HepG2 (cell line): ENCODE measurements at regions of chr13 and their contacts with region 1.

Region 1: GRCh38 chr13:87208636-87209035 is 462.5 kb upstream of the SLITRK5 start:
- DNase-seq: no peak
- ATAC-seq: no peak
- H3K4me3 ChIP-seq: no peak overlapping the region
- H3K27ac ChIP-seq: no peak overlapping the region
- H3K4me1 ChIP-seq: no peaks in the 10 kb centered on the region
- H3K27me3 ChIP-seq: no peaks in the 10 kb centered on the region
- CTCF ChIP-seq: no peak
- EP300 ChIP-seq: no peak
- POLR2A ChIP-seq: no peak
- RAD21 ChIP-seq: no peak

Region 2: DNA sequence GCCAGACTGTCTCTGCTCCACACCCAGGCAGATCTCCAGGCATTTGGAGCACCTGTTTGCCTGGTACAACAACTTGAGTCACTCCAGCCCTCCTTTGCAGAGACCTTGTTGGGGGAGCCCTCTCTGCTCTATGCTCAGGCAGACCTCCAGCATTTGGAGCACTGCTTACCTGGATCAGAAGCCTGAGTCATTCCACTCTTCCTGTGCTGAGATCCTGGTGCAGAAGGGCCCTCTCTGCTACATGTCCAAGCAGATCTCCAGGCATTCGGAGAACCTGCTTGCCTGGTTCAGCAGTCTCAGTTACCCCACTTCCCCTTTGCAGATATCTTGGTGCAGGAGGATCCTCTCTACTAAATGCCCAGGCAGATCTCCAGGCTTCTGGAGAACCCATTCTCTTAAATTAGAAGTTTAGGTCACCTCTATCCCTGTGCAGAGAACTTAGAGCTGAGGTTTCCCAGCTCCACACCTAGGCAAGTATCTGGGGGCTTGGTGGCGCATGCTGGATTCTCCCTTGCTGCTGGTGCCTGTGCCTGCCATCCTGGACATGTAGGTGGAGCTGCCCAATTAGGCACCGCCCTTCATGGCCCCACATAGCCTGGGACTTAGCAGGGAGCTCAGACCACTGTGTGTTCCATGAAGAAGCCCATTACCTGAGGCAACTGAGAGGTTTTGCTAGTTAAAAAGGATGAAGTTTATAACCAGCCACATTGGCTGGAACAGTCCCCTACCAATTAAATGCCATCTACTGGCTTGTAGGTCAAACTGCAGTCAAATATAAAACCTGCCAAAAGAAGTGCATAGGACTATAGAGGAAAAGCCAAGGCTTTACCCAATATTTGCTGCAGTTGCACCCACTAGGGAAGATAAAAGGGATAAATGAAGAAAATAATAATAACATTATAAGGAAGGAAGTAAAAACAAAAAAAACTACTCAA is 1311.9 kb before region 1 on chr13:
- CTCF ChIA-PET with region 1: no interaction called
- POLR2A ChIA-PET with region 1: no interaction called
- in situ Hi-C with region 1: no loop called
- intact Hi-C with region 1: loop called (anchors 10 kb)
- DNase-seq: no peak
- ATAC-seq: peak; percentile 76
- H3K4me3 ChIP-seq: no peak overlapping the region
- H3K27ac ChIP-seq: no peak overlapping the region
- H3K4me1 ChIP-seq: no peaks in the 10 kb centered on the region
- H3K27me3 ChIP-seq: no peaks in the 10 kb centered on the region
- CTCF ChIP-seq: 0 out of 2 replicates have a peak, but pooled peaks have one; percentile 8
- EP300 ChIP-seq: no peak
- POLR2A ChIP-seq: no peak
- RAD21 ChIP-seq: no peak

Region 3: GRCh38 chr13:87003265-87003664 is 205.4 kb before region 1 on chr13:
- CTCF ChIA-PET with region 1: no interaction called
- POLR2A ChIA-PET with region 1: no interaction called
- in situ Hi-C with region 1: no loop called
- intact Hi-C with region 1: no loop called
- DNase-seq: no peak
- ATAC-seq: no peak
- H3K4me3 ChIP-seq: no peak overlapping the region
- H3K27ac ChIP-seq: no peak overlapping the region
- H3K4me1 ChIP-seq: no peaks in the 10 kb centered on the region
- H3K27me3 ChIP-seq: no peaks in the 10 kb centered on the region
- CTCF ChIP-seq: no peak
- EP300 ChIP-seq: no peak
- POLR2A ChIP-seq: no peak
- RAD21 ChIP-seq: no peak

Region 4: GRCh38 chr13:87280139-87280538 is 71.5 kb after region 1 on chr13:
- CTCF ChIA-PET with region 1: no interaction called
- POLR2A ChIA-PET with region 1: no interaction called
- in situ Hi-C with region 1: no loop called
- intact Hi-C with region 1: no loop called
- DNase-seq: no peak
- ATAC-seq: no peak
- H3K4me3 ChIP-seq: no peak overlapping the region
- H3K27ac ChIP-seq: no peak overlapping the region
- H3K4me1 ChIP-seq: no peaks in the 10 kb centered on the region
- H3K27me3 ChIP-seq: no peaks in the 10 kb centered on the region
- CTCF ChIP-seq: no peak
- EP300 ChIP-seq: no peak
- POLR2A ChIP-seq: no peak
- RAD21 ChIP-seq: no peak

Region 5: GRCh38 chr13:87975035-87975434 is 766.4 kb after region 1 on chr13:
- CTCF ChIA-PET with region 1: no interaction called
- POLR2A ChIA-PET with region 1: no interaction called
- in situ Hi-C with region 1: no loop called
- intact Hi-C with region 1: no loop called
- DNase-seq: no peak
- ATAC-seq: no peak
- H3K4me3 ChIP-seq: no peak overlapping the region
- H3K27ac ChIP-seq: no peak overlapping the region
- H3K4me1 ChIP-seq: no peaks in the 10 kb centered on the region
- H3K27me3 ChIP-seq: no peaks in the 10 kb centered on the region
- CTCF ChIP-seq: no peak
- EP300 ChIP-seq: no peak
- POLR2A ChIP-seq: no peak
- RAD21 ChIP-seq: no peak